ENCODE measurements at regions of chr7 and their contacts with region 1.

Region 1: GRCh38 chr7:18345641-18346234 is 149.8 kb upstream of the HDAC9 start:
- DNase-seq: peak; percentile 81
- ATAC-seq: peak; percentile 82
- H3K4me3 ChIP-seq: no peak overlapping the region
- H3K27ac ChIP-seq: no peak overlapping the region
- H3K4me1 ChIP-seq: no peaks in the 10 kb centered on the region
- H3K27me3 ChIP-seq: no peaks in the 10 kb centered on the region
- CTCF ChIP-seq: peak; percentile 91

Region 2: DNA sequence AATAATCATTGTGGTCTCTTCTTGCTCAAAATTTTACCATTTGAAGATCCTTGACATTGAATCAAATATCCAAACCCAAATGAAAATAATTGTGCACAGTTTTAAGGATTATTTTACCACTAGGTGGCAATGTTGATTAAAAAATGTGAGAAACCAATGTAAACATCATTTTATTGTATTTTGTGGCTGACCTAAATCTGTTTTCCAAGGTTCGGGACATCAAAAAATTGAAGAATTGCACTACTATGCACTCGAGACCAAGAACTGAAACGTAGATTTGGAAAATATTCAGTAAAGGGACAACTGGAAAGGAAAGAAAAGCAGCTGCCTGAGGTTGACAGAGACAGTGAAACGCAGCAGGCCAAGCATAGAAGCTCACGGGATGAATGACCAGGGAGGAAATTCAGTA is 664.8 kb before region 1 on chr7:
- CTCF ChIA-PET with region 1: interaction called, 6 read pairs
- POLR2A ChIA-PET with region 1: no interaction called
- intact Hi-C with region 1: loop called (anchors 1 kb)
- DNase-seq: peak; percentile 79
- ATAC-seq: peak; percentile 29
- H3K4me3 ChIP-seq: peak overlapping the region; percentile 47; the same call in 1 of the 2 replicates
- H3K27ac ChIP-seq: peak overlapping the region; percentile 72
- H3K4me1 ChIP-seq: peaks cover 49% of the 10 kb centered on the region
- H3K27me3 ChIP-seq: no peaks in the 10 kb centered on the region
- CTCF ChIP-seq: peak; percentile 79

Region 3: DNA sequence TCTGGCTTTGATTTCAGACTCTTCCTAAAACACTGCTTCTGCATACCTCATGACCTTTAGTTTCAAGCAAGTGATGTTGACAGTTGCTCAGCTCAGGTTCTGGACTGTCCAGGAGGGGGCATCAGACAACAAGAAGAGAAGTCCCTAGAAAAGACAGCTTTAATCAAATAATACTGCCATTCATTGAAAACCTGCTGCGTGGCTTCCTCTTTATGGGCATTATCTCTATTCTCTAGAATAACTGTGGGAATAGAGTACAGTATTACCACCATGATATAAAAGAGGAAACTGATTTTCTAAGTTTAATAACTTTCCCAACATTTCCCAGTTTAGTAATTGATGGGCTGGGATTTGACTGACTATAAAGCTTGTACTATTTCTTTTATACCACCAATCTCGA is 575.8 kb before region 1 on chr7:
- CTCF ChIA-PET with region 1: interaction called, 3 read pairs
- POLR2A ChIA-PET with region 1: interaction called, 3 read pairs
- intact Hi-C with region 1: loop called (anchors 1 kb)
- DNase-seq: peak; percentile 79
- ATAC-seq: peak; percentile 78
- H3K4me3 ChIP-seq: no peak overlapping the region
- H3K27ac ChIP-seq: no peak overlapping the region
- H3K4me1 ChIP-seq: peaks cover 21% of the 10 kb centered on the region
- H3K27me3 ChIP-seq: no peaks in the 10 kb centered on the region
- CTCF ChIP-seq: peak; percentile 92

Region 4: DNA sequence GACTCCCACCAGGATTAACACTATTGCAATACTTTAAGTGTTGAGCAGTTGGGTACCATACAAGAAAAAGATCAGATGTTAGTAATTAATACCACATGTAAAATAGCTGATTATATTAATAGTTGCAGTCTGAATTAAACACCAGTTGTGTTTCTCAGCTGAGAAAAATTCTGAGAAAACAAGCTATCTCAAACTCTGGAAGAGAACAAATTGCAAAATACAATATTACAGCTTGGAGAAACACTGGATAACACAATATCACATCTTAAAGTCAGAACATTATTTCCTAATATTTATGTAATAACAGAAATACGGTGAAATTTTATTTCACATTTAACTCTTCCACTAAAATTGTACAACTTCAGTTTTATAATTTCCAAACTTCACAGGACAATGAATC is 414.7 kb before region 1 on chr7:
- CTCF ChIA-PET with region 1: interaction called, 13 read pairs
- POLR2A ChIA-PET with region 1: no interaction called
- intact Hi-C with region 1: no loop called
- DNase-seq: no peak
- ATAC-seq: no peak
- H3K4me3 ChIP-seq: no peak overlapping the region
- H3K27ac ChIP-seq: no peak overlapping the region
- H3K4me1 ChIP-seq: no peaks in the 10 kb centered on the region
- H3K27me3 ChIP-seq: no peaks in the 10 kb centered on the region
- CTCF ChIP-seq: no peak

Region 5: GRCh38 chr7:18064242-18064838 is 281.4 kb before region 1 on chr7:
- CTCF ChIA-PET with region 1: no interaction called
- POLR2A ChIA-PET with region 1: no interaction called
- intact Hi-C with region 1: loop called (anchors 1 kb)
- DNase-seq: peak; percentile 77
- ATAC-seq: peak; percentile 61
- H3K4me3 ChIP-seq: no peak overlapping the region
- H3K27ac ChIP-seq: no peak overlapping the region
- H3K4me1 ChIP-seq: no peaks in the 10 kb centered on the region
- H3K27me3 ChIP-seq: no peaks in the 10 kb centered on the region
- CTCF ChIP-seq: peak; percentile 80

Region 6: DNA sequence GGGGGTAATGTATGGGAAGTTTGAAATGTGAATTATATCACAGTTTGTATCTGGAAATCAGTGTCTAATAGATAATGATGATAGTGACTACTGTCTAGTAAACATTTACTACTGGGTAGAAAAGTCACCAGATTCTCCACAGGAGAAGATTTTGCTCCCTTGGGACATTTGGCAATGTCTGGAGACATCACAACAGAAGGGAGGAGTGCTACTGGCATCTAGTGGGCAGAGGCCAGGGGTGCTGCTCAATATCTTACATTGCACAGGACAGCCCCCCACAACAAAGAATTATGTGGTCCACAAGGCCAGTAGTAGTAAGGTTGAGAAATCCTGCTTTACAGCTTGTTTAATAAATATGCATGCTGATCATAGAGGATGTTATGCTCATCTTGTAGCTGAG is 225.8 kb before region 1 on chr7:
- CTCF ChIA-PET with region 1: interaction called, 3 read pairs
- POLR2A ChIA-PET with region 1: no interaction called
- intact Hi-C with region 1: loop called (anchors 5 kb)
- DNase-seq: peak; percentile 38
- ATAC-seq: peak; percentile 71
- H3K4me3 ChIP-seq: no peak overlapping the region
- H3K27ac ChIP-seq: no peak overlapping the region
- H3K4me1 ChIP-seq: no peaks in the 10 kb centered on the region
- H3K27me3 ChIP-seq: no peaks in the 10 kb centered on the region
- CTCF ChIP-seq: peak; percentile 64

Region 7: GRCh38 chr7:18206331-18206730 is 139.4 kb before region 1 on chr7:
- CTCF ChIA-PET with region 1: no interaction called
- POLR2A ChIA-PET with region 1: no interaction called
- intact Hi-C with region 1: loop called (anchors 5 kb)
- DNase-seq: no peak
- ATAC-seq: no peak
- H3K4me3 ChIP-seq: no peak overlapping the region
- H3K27ac ChIP-seq: no peak overlapping the region
- H3K4me1 ChIP-seq: peaks cover 9% of the 10 kb centered on the region
- H3K27me3 ChIP-seq: no peaks in the 10 kb centered on the region
- CTCF ChIP-seq: no peak